SK-N-SH (cell line): ENCODE measurements at regions of chr3 and their contacts with region 1.

Region 1: DNA sequence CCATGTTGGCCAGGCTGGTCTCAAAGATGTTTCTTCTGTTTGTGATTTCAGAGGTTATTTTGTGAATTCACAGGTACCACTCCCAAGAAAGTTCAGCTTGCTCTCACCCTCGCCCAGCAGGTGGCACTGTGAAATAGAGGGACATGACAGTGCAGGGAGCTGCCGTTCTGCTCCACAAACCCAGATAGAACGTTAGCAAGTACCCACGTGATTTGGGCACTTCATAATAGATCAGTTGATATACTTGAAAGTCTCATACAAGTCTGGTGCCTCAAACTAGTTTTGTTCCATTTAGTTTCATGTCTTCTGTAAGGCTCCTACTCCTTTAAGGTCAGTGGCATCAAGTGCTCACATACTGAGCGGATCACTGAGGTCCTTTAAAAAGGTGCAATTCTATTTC is 45.5 kb downstream of the FILIP1L start:
- DNase-seq: peak; percentile 73
- H3K4me3 ChIP-seq: no peak overlapping the region; a peak in 1 of 4 replicates
- H3K27ac ChIP-seq: no peak overlapping the region
- H3K4me1 ChIP-seq: peaks cover 0 to 8% of the 10 kb centered on the region in 2 experiments; a peak in 1 of 4 replicates
- H3K27me3 ChIP-seq: no peaks in the 10 kb centered on the region
- CTCF ChIP-seq: peak; percentile 83
- EP300 ChIP-seq: no peak
- RAD21 ChIP-seq: peak; percentile 91

Region 2: GRCh38 chr3:99833617-99834205 is 235.1 kb before region 1 on chr3:
- CTCF ChIA-PET with region 1: interaction called, 12 read pairs
- POLR2A ChIA-PET with region 1: no interaction called
- DNase-seq: peak; percentile 8
- H3K4me3 ChIP-seq: no peak overlapping the region
- H3K27ac ChIP-seq: no peak overlapping the region
- H3K4me1 ChIP-seq: peaks cover 0 to 4% of the 10 kb centered on the region in 2 experiments; a peak in 3 of 4 replicates
- H3K27me3 ChIP-seq: no peaks in the 10 kb centered on the region
- CTCF ChIP-seq: no peak
- EP300 ChIP-seq: no peak
- RAD21 ChIP-seq: no peak

Region 3: GRCh38 chr3:99842826-99843589 is 225.8 kb before region 1 on chr3:
- CTCF ChIA-PET with region 1: interaction called, 13 read pairs
- POLR2A ChIA-PET with region 1: no interaction called
- DNase-seq: peak; percentile 37
- H3K4me3 ChIP-seq: no peak overlapping the region; a peak in 1 of 4 replicates
- H3K27ac ChIP-seq: peak overlapping the region; percentile 11 to 32; a peak in 2 of 4 replicates
- H3K4me1 ChIP-seq: peaks cover 4 to 7% of the 10 kb centered on the region in 2 experiments; a peak in 2 of 4 replicates
- H3K27me3 ChIP-seq: no peaks in the 10 kb centered on the region
- CTCF ChIP-seq: peak; percentile 86
- EP300 ChIP-seq: no peak
- RAD21 ChIP-seq: peak; percentile 84

Region 4: GRCh38 chr3:100150473-100150872 is 81.6 kb after region 1 on chr3:
- CTCF ChIA-PET with region 1: interaction called, 10 read pairs
- POLR2A ChIA-PET with region 1: no interaction called
- DNase-seq: no peak
- H3K4me3 ChIP-seq: no peak overlapping the region
- H3K27ac ChIP-seq: no peak overlapping the region
- H3K4me1 ChIP-seq: peaks cover 0 to 12% of the 10 kb centered on the region in 2 experiments; a peak in 2 of 4 replicates
- H3K27me3 ChIP-seq: no peaks in the 10 kb centered on the region
- CTCF ChIP-seq: no peak
- EP300 ChIP-seq: no peak
- RAD21 ChIP-seq: no peak

Region 5: DNA sequence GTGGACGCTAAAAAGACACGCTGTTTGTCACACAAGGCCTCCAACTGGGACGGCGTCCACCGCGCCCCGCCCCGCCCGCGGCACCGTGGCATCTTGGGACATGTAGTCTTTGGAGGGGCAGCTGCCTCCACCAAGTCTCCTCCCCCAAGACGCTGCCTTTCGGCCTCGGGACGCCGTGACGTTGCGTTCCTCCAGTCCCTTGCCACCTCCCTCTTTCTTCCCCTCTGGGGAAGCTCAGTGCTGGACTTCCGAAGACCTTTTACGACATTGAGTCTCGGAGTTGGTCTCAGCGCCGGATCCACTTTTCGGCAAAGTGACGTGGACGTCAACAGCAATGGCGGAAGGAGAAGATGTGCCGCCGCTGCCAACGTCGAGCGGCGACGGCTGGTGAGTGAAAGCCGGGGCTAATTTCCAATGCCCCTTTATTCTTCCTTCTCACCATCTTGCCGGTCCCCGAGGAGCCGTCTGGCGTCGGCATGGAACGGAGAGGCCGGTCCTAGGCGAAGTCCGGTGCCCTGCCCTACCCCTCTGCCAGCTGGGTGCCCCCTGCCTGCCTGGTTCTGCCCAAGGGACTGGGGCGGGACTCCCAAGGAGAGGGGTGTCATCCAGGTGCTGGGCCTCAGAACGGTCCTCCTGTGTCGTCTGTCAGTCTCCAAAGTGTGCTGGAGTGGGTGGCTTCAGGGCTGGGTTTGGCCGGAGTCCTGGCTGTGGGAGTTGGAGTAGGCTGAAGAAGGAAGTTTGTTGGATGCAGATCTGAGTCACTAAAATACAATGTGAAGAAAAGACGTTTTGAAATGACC is 192.1 kb after region 1 on chr3 and contains the start of gene TBC1D23:
- CTCF ChIA-PET with region 1: interaction called, 31 read pairs
- POLR2A ChIA-PET with region 1: interaction called, 3 read pairs
- DNase-seq: peak; percentile 93
- H3K4me3 ChIP-seq: peak within 1 kb of the TSS; percentile 97 to 99
- H3K27ac ChIP-seq: peak within 1 kb of the TSS; percentile 86 to 93
- H3K4me1 ChIP-seq: peaks cover 16 to 25% of the 10 kb centered on the region in 2 experiments; a peak in 3 of 4 replicates
- H3K27me3 ChIP-seq: no peaks in the 10 kb centered on the region
- CTCF ChIP-seq: no peak; the same call in 1 of the 2 replicates
- EP300 ChIP-seq: no peak
- RAD21 ChIP-seq: no peak
- polyA plus RNA-seq, gene TBC1D23: 6.7 and 10.9 TPM in 2 replicates